Activated CD4-positive, alpha-beta memory T cell treated with anti-CD3 and anti-CD28 coated beads, Interleukin-2, amount 10 ng/mL, durations not matched to agents 7 days and 5 days (primary cell): ENCODE measurements at regions of chr11 and their contacts with region 1.

Region 1: DNA sequence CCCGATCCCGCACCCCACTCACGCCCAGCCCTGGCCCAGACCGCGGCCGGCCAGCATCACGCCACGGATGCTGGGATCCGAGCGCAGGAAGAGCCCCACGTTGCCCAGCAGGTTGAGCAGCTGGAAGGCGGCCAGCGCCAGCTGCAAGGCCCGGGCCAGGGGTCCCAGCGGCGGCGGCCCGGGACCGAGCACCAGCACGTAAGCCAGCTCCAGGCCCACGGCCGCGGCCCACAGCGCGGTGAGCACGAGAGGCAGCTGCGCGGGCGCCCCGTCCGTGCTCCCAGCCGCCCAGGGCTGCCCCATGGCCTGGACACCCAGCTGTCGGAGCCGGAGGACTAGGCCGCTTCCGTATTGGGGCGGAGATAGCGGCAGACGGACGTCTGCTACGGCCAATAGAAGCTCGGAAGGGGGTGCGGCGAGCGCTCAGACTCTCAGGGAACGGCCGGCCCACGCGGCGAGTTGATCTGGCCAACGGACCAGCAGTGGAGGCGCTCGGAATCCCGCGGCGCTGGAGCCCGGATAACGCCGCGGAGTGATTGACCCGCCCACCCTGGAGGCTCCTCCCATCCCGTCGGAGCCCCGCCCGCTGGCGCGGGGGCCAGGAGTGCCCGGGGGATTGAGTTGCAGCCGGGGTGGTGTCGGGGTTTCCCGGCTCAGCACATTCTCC is at the start of gene ZDHHC24:
- DNase-seq: peak; percentile 93
- H3K4me3 Mint-ChIP-seq: peak within 1 kb of the TSS; percentile 79
- H3K27ac Mint-ChIP-seq: peak within 1 kb of the TSS; percentile 71
- H3K4me1 Mint-ChIP-seq: peaks cover 40% of the 10 kb centered on the region
- H3K27me3 Mint-ChIP-seq: peaks cover 13% of the 10 kb centered on the region
- total RNA-seq, gene ZDHHC24: 25.9 to 26.0 TPM

Region 2: DNA sequence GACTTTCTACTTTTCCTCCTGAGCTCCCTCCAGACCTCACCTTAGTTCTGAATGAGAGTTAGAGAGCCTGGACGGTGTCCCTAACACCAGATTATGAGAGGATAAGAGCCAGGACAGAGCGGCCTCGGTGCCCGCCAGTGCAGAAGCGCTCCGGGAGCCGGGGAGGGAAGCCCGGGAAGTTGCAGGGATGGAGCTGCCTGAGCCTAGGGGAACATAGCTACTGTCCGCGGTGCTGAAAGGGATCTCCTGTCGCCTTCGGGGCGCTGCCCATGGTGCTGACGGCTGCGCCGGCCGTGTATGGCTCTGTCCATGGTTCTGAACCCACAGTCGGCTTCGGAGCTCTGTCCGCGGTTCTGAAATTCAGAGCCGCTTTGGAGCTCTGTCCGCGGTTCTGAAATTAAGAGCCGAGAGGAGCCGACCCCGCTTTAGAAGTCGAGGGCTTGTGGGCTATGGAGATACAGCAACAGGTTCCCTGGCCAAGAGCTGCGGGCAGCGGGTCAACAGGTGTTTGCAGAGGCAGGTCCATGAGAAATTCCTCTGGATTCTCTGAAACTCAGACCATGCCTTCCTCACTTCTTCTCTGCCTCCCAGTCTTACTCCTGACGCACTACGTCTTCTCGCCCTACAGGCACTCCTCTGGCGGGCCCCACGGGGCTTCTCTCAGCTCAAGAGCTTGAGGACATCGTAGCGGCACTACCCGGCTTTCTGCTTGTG is 124.2 kb before region 1 on chr11:
- CTCF ChIA-PET with region 1: no interaction called
- POLR2A ChIA-PET with region 1: no interaction called
- DNase-seq: peak; percentile 90
- H3K4me3 Mint-ChIP-seq: no peak overlapping the region
- H3K27ac Mint-ChIP-seq: no peak overlapping the region
- H3K4me1 Mint-ChIP-seq: peaks cover 17% of the 10 kb centered on the region
- H3K27me3 Mint-ChIP-seq: peaks cover 31% of the 10 kb centered on the region

Region 3: DNA sequence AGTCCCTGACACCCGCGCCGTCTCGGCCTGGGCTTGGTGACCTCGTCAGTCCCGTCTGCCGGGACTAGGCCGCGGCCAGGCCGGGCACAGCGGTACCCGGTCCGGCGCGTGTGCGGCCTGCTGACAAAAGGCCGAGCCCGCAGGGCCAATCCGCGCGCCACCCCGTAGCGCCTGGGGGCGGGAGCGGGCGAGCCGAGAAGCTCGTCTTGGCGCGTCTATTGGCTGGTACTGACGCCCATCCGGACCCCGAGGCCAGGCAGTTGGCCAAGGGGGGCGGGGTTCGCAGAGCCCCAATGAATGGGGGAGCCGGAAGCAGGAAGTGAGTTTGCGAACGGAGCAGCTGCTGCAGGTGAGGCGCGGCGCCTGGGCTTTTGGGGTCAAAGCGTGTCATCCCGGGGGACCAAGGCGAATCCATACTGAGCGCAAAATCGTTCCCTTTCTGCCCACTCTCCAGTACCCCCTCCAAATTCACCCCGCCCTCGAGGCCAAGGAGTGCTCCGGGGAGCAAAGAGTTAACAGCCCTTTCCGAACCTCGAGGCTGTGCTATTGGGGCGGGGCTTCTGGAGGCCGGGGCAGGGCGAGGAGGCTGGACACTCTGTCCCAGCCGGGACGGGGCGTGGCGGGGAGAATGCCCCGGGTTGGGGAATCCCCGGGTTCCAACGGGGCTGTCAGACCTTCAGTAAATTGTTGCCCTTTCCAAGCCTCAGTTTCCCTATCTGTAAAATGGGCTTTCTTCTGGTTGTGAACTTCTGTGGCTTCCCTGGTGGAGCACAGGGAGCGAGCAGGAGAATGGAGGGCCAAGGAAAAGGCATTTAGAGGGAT is 65.5 kb before region 1 on chr11 and contains the start of gene DPP3:
- CTCF ChIA-PET with region 1: interaction called, 4 read pairs
- POLR2A ChIA-PET with region 1: interaction called, 14 read pairs
- DNase-seq: peak; percentile 97
- H3K4me3 Mint-ChIP-seq: peak within 1 kb of the TSS; percentile 78
- H3K27ac Mint-ChIP-seq: peak within 1 kb of the TSS; percentile 86
- H3K4me1 Mint-ChIP-seq: peaks cover 27% of the 10 kb centered on the region
- H3K27me3 Mint-ChIP-seq: no peaks in the 10 kb centered on the region
- total RNA-seq, gene DPP3: 59.3 to 60.6 TPM

Region 4: GRCh38 chr11:66510271-66510989 is 35.4 kb before region 1 on chr11 and contains the start of gene BBS1:
- CTCF ChIA-PET with region 1: no interaction called
- POLR2A ChIA-PET with region 1: interaction called, 11 read pairs
- DNase-seq: peak; percentile 83
- H3K4me3 Mint-ChIP-seq: peak within 1 kb of the TSS; percentile 87
- H3K27ac Mint-ChIP-seq: peak within 1 kb of the TSS; percentile 79
- H3K4me1 Mint-ChIP-seq: peaks cover 28% of the 10 kb centered on the region
- H3K27me3 Mint-ChIP-seq: no peaks in the 10 kb centered on the region
- total RNA-seq, gene BBS1: 16.8 to 16.9 TPM

Region 5: DNA sequence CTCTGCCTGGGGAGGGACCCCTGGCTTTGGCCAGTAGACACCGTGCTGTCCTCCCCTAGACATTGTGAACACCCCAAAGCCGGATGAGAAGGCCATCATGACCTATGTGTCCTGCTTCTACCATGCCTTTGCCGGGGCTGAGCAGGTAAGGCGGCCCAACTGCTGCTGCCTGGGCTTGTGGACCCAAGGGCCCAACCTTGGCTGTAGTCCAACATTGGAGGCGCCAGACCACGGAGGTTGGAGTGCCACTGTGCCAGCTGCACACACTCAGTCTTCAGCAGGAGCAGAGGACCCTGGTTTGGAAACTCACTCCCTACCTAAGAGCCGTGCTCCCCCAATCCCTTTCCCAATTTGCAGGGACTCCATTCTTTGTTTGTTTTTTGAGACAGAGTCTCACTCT is 10.3 kb after region 1 on chr11:
- CTCF ChIA-PET with region 1: no interaction called
- POLR2A ChIA-PET with region 1: interaction called, 16 read pairs
- DNase-seq: no peak
- H3K4me3 Mint-ChIP-seq: no peak overlapping the region
- H3K27ac Mint-ChIP-seq: no peak overlapping the region
- H3K4me1 Mint-ChIP-seq: no peaks in the 10 kb centered on the region
- H3K27me3 Mint-ChIP-seq: peaks cover 9% of the 10 kb centered on the region

Region 6: DNA sequence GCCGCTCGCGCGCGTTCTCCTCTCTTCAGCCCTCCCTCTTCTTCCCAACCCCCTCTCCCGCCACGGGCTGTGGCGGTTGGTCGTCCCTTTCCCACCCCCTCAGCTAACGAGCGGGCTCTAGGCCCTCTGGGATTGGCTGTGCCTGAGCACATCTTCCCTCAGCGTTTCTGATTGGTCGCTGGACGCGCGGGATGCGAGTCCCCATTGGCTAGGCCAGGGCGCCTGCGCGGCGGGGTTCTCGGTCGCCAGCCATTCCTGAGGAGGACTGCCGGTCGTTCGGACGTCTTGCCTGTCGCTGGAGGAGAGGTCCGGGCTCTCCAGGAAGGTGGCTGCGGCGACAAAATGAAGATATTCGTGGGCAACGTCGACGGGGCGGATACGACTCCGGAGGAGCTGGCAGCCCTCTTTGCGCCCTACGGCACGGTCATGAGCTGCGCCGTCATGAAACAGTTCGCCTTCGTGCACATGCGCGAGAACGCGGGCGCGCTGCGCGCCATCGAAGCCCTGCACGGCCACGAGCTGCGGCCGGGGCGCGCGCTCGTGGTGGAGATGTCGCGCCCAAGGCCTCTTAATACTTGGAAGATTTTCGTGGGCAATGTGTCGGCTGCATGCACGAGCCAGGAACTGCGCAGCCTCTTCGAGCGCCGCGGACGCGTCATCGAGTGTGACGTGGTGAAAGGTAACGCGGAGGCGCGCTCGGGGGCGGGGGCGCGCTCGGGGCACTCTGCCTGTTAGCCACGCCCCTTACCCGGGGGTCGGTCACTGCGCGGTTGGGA is 70.7 kb after region 1 on chr11 and contains the start of gene RBM14:
- CTCF ChIA-PET with region 1: no interaction called
- POLR2A ChIA-PET with region 1: interaction called, 20 read pairs
- DNase-seq: peak; percentile 98
- H3K4me3 Mint-ChIP-seq: peak within 1 kb of the TSS; percentile 97
- H3K27ac Mint-ChIP-seq: peak within 1 kb of the TSS; percentile 98
- H3K4me1 Mint-ChIP-seq: peaks cover 43% of the 10 kb centered on the region
- H3K27me3 Mint-ChIP-seq: no peaks in the 10 kb centered on the region
- total RNA-seq, gene RBM14: 116 to 120 TPM

Region 7: GRCh38 chr11:66686801-66687750 is 141.2 kb after region 1 on chr11:
- CTCF ChIA-PET with region 1: no interaction called
- POLR2A ChIA-PET with region 1: no interaction called
- DNase-seq: no peak
- H3K4me3 Mint-ChIP-seq: no peak overlapping the region
- H3K27ac Mint-ChIP-seq: no peak overlapping the region
- H3K4me1 Mint-ChIP-seq: no peaks in the 10 kb centered on the region
- H3K27me3 Mint-ChIP-seq: peaks cover 3% of the 10 kb centered on the region

Region 8: GRCh38 chr11:66842896-66843775 is 297.3 kb after region 1 on chr11 and contains the start of gene RCE1:
- CTCF ChIA-PET with region 1: no interaction called
- POLR2A ChIA-PET with region 1: interaction called, 12 read pairs
- DNase-seq: peak; percentile 93
- H3K4me3 Mint-ChIP-seq: peak within 1 kb of the TSS; percentile 93
- H3K27ac Mint-ChIP-seq: peak within 1 kb of the TSS; percentile 93
- H3K4me1 Mint-ChIP-seq: peaks cover 58% of the 10 kb centered on the region
- H3K27me3 Mint-ChIP-seq: no peaks in the 10 kb centered on the region
- total RNA-seq, gene RCE1: 21.2 to 22.0 TPM